ENCODE measurements at regions of chr9 and their contacts with region 1.

Region 1: GRCh38 chr9:94867281-94867841 is 140.9 kb downstream of the AOPEP start:
- DNase-seq: peak; percentile 93
- H3K4me3 ChIP-seq: peak overlapping the region in 1 of 3 experiments; percentile 16
- H3K27ac ChIP-seq: peak overlapping the region; percentile 90
- H3K4me1 ChIP-seq: peaks cover 47% of the 10 kb centered on the region
- H3K27me3 ChIP-seq: no peaks in the 10 kb centered on the region
- CTCF ChIP-seq: no peak
- POLR2A ChIP-seq: no peak

Region 2: DNA sequence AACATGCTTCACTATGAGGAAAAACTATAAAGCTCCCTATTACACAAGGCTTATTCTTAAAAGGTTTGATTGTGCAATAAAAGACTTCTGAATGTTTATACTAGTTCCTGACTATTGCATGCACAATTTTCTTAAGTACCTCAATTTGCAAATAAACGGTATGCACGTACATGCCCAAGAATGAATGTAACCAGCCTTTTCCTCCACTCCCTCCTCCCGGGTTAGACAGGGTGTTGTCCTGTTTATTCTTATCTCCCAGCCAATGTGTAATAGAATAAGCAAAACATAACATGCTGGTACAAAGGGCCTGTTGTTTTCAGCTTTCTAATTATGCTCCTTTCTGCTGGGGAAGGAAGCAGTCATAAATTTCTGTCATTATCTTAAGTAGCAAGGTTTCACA is 61.8 kb before region 1 on chr9:
- CTCF ChIA-PET with region 1: interaction called, 6 read pairs
- POLR2A ChIA-PET with region 1: no interaction called
- dilution Hi-C with region 1: no loop called
- intact Hi-C with region 1: loop called (anchors 2 kb)
- DNase-seq: peak; percentile 96
- H3K4me3 ChIP-seq: no peak overlapping the region
- H3K27ac ChIP-seq: peak overlapping the region; percentile 52
- H3K4me1 ChIP-seq: peaks cover 17% of the 10 kb centered on the region
- H3K27me3 ChIP-seq: no peaks in the 10 kb centered on the region
- CTCF ChIP-seq: no peak
- POLR2A ChIP-seq: peak; percentile 20

Region 3: GRCh38 chr9:94847486-94847885 is 19.9 kb before region 1 on chr9:
- CTCF ChIA-PET with region 1: interaction called, 4 read pairs
- POLR2A ChIA-PET with region 1: no interaction called
- dilution Hi-C with region 1: no loop called
- intact Hi-C with region 1: loop called (anchors 1 kb)
- DNase-seq: peak; percentile 88
- H3K4me3 ChIP-seq: no peak overlapping the region
- H3K27ac ChIP-seq: peak overlapping the region; percentile 15
- H3K4me1 ChIP-seq: peaks cover 11% of the 10 kb centered on the region
- H3K27me3 ChIP-seq: no peaks in the 10 kb centered on the region
- CTCF ChIP-seq: no peak
- POLR2A ChIP-seq: no peak

Region 4: GRCh38 chr9:94917840-94918753 is 50.7 kb after region 1 on chr9:
- CTCF ChIA-PET with region 1: interaction called, 9 read pairs
- POLR2A ChIA-PET with region 1: no interaction called
- dilution Hi-C with region 1: no loop called
- intact Hi-C with region 1: loop called (anchors 1 kb)
- DNase-seq: no peak
- H3K4me3 ChIP-seq: no peak overlapping the region
- H3K27ac ChIP-seq: no peak overlapping the region
- H3K4me1 ChIP-seq: peaks cover 40% of the 10 kb centered on the region
- H3K27me3 ChIP-seq: no peaks in the 10 kb centered on the region
- CTCF ChIP-seq: no peak
- POLR2A ChIP-seq: no peak

Region 5: GRCh38 chr9:94952565-94953373 is 85.4 kb after region 1 on chr9:
- CTCF ChIA-PET with region 1: no interaction called
- POLR2A ChIA-PET with region 1: no interaction called
- dilution Hi-C with region 1: no loop called
- intact Hi-C with region 1: loop called (anchors 5 kb)
- DNase-seq: peak; percentile 89
- H3K4me3 ChIP-seq: no peak overlapping the region
- H3K27ac ChIP-seq: peak overlapping the region; percentile 55
- H3K4me1 ChIP-seq: peaks cover 28% of the 10 kb centered on the region
- H3K27me3 ChIP-seq: no peaks in the 10 kb centered on the region
- CTCF ChIP-seq: no peak
- POLR2A ChIP-seq: no peak

Region 6: GRCh38 chr9:95250462-95251221 is 383.3 kb after region 1 on chr9:
- CTCF ChIA-PET with region 1: no interaction called
- POLR2A ChIA-PET with region 1: no interaction called
- dilution Hi-C with region 1: no loop called
- intact Hi-C with region 1: no loop called
- DNase-seq: no peak
- H3K4me3 ChIP-seq: no peak overlapping the region
- H3K27ac ChIP-seq: no peak overlapping the region
- H3K4me1 ChIP-seq: no peaks in the 10 kb centered on the region
- H3K27me3 ChIP-seq: no peaks in the 10 kb centered on the region
- CTCF ChIP-seq: no peak
- POLR2A ChIP-seq: no peak

Region 7: DNA sequence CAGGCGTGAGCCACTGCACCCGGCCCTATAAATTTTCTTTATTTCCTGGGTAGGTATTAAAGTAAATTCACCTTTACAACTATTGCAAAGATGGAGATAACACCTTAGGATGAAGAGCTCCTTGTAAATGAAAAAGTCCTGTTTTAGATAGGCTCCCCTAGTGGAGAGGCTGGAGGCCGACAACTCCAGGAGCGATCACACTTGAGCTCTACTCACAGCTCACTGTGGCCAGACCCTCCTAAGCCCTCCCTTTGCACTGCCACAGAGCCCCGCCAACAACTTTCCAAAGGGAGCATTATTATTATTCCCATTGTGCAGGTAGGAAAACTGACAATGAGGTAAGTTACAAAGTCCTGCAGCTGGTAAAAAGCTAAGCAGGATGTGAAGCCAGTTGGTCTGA is 869.0 kb after region 1 on chr9:
- CTCF ChIA-PET with region 1: no interaction called
- POLR2A ChIA-PET with region 1: no interaction called
- dilution Hi-C with region 1: no loop called
- intact Hi-C with region 1: no loop called
- DNase-seq: no peak
- H3K4me3 ChIP-seq: no peak overlapping the region
- H3K27ac ChIP-seq: no peak overlapping the region
- H3K4me1 ChIP-seq: no peaks in the 10 kb centered on the region
- H3K27me3 ChIP-seq: no peaks in the 10 kb centered on the region
- CTCF ChIP-seq: peak; percentile 27 to 43
- POLR2A ChIP-seq: no peak